GM13976 (cell line): ENCODE measurements at regions of chr22 and their contacts with region 1.

Region 1: GRCh38 chr22:28112548-28113043 is 193.5 kb upstream of the PITPNB start:
- DNase-seq: no peak
- CTCF ChIP-seq: no peak

Region 2: GRCh38 chr22:27919222-27919941 is 193.2 kb before region 1 on chr22 and contains the start of gene PITPNB:
- in situ Hi-C with region 1: no loop called
- DNase-seq: peak; percentile 100
- CTCF ChIP-seq: no peak

Region 3: DNA sequence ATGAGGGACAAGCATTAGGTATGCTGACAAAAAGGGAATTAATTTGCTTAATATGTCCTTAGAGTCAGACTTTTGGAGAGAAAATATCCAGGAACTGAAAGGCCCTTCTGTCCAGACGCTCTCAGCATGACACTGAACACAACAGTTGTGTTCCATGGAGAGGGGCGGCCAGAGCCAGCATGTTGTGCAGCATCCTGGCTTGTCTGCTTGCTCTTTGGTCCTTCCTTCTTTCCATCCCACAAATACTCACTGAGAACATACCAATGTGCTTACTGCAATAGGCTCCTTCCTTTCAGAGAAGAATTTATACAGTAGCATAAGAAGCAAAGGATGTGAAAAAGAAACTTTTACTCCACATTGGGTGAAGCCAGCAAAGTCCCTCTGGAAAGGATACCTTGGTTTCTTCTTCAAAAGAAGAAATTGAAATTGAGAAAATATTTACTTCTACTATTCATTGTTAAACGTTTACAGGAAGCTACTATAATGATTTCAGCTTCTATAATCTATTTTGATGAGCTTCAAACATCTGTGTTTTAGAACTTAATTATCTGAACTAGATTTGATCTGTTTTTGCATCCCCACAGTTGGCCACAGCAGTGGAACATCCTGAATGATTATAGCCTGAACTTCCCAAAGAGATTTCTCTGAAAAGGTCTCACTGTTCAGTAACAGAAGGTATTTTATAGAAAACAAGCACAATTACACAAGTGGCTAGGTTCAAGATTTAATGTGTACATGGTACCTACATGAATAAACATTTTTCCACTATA is 110.6 kb after region 1 on chr22:
- in situ Hi-C with region 1: loop called (anchors 25 kb)
- DNase-seq: no peak
- CTCF ChIP-seq: no peak